ENCODE measurements at regions of chr4 and their contacts with region 1.

Region 1: DNA sequence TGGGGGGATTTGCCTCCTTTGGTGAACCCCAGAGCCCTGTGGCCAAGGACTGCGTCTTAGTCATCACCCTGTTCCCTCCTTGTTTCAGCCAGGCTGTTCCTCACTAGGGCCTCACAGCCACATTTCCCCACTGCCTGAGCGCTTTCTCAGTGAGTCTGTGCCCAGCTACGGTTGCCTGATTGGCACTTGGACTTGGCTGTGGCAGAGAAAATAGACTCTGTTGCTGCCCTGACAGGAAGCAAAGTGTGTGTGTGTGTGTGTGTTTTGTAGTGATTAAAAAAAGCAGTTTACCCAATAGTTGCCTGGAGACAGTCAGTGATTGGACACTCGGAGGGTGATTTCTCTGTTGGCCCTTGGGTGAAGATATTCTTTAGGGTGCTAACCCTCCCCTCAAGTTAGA is 113.0 kb downstream of the UCHL1 start:
- DNase-seq: peak; percentile 46 to 82
- ATAC-seq: peak; percentile 83 to 84
- H3K4me3 ChIP-seq: peak overlapping the region; percentile 12 to 28 (median 20)
- H3K27ac ChIP-seq: peak overlapping the region; percentile 70 to 91 (median 86)
- H3K4me1 ChIP-seq: peaks cover 76 to 80% of the 10 kb centered on the region in 2 donors
- H3K27me3 ChIP-seq: no peaks in the 10 kb centered on the region
- CTCF ChIP-seq: no peak
- POLR2A ChIP-seq: no peak

Region 2: GRCh38 chr4:41294445-41295062 is 75.1 kb before region 1 on chr4:
- in situ Hi-C with region 1: no loop called
- intact Hi-C with region 1: no loop called
- DNase-seq: no peak
- ATAC-seq: no peak
- H3K4me3 ChIP-seq: no peak overlapping the region
- H3K27ac ChIP-seq: no peak overlapping the region
- H3K4me1 ChIP-seq: peaks cover 0 to 3% of the 10 kb centered on the region in 2 donors
- H3K27me3 ChIP-seq: no peaks in the 10 kb centered on the region
- CTCF ChIP-seq: no peak
- POLR2A ChIP-seq: no peak

Region 3: GRCh38 chr4:41307638-41308037 is 62.1 kb before region 1 on chr4:
- in situ Hi-C with region 1: no loop called
- intact Hi-C with region 1: no loop called
- DNase-seq: no peak
- ATAC-seq: no peak
- H3K4me3 ChIP-seq: no peak overlapping the region
- H3K27ac ChIP-seq: no peak overlapping the region
- H3K4me1 ChIP-seq: peaks cover 5 to 10% of the 10 kb centered on the region in 2 donors
- H3K27me3 ChIP-seq: no peaks in the 10 kb centered on the region
- CTCF ChIP-seq: no peak
- POLR2A ChIP-seq: no peak

Region 4: DNA sequence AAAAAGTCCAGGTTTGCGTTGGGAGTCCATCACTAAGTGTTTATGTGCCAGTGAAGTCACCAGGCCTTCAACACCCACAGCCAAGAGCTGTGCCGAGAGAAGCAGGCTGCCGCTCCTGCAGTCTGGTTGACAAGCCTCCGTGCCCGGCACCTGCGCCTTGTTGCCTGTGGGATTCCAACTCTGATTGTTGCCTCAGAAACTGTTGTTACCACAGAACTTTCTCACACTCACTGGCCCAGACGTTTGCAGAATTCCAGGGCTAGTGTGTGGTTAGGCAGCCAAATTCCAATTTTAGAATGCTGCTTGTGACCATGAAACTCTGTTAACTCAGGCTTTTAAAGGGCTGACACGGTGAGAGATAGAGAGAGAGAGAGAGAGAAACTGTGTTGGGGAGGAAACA is 48.7 kb after region 1 on chr4:
- in situ Hi-C with region 1: no loop called
- intact Hi-C with region 1: loop called (anchors 2 kb)
- DNase-seq: peak; percentile 75 to 88
- ATAC-seq: peak; percentile 87 to 91
- H3K4me3 ChIP-seq: peak overlapping the region in 2 of 4 donors; percentile 13 to 17
- H3K27ac ChIP-seq: peak overlapping the region; percentile 57 to 79 (median 74)
- H3K4me1 ChIP-seq: peaks cover 36 to 38% of the 10 kb centered on the region in 2 donors
- H3K27me3 ChIP-seq: no peaks in the 10 kb centered on the region
- CTCF ChIP-seq: no peak
- POLR2A ChIP-seq: no peak

Region 5: GRCh38 chr4:41432881-41433280 is 63.2 kb after region 1 on chr4:
- in situ Hi-C with region 1: no loop called
- intact Hi-C with region 1: no loop called
- DNase-seq: no peak
- ATAC-seq: no peak
- H3K4me3 ChIP-seq: no peak overlapping the region
- H3K27ac ChIP-seq: no peak overlapping the region
- H3K4me1 ChIP-seq: peaks cover 78% of the 10 kb centered on the region in 2 donors
- H3K27me3 ChIP-seq: no peaks in the 10 kb centered on the region
- CTCF ChIP-seq: no peak
- POLR2A ChIP-seq: no peak